MCF 10A (cell line): ENCODE measurements at regions of chr11 and their contacts with region 1.

Region 1: GRCh38 chr11:6481012-6481923 is at the starts of genes ARFIP2 and TIMM10B:
- DNase-seq: peak; percentile 96
- H3K4me3 Mint-ChIP-seq: peak within 1 kb of the TSS; percentile 93
- H3K27ac Mint-ChIP-seq: peak within 1 kb of the TSS; percentile 99
- H3K4me1 Mint-ChIP-seq: peaks cover 17% of the 10 kb centered on the region
- H3K27me3 Mint-ChIP-seq: no peaks in the 10 kb centered on the region
- CTCF ChIP-seq: no peak
- total RNA-seq, gene ARFIP2: 76.3 and 96.0 TPM in 2 replicates
- total RNA-seq, gene TIMM10B: 36.2 and 42.1 TPM in 2 replicates

Region 2: GRCh38 chr11:6419009-6419631 is 62.1 kb before region 1 on chr11 and contains the start of gene APBB1:
- CTCF ChIA-PET with region 1: no interaction called
- POLR2A ChIA-PET with region 1: interaction called, 10 read pairs
- intact Hi-C with region 1: no loop called
- DNase-seq: no peak
- H3K4me3 Mint-ChIP-seq: peak within 1 kb of the TSS; percentile 45
- H3K27ac Mint-ChIP-seq: no peak within 1 kb of the TSS
- H3K4me1 Mint-ChIP-seq: no peaks in the 10 kb centered on the region
- H3K27me3 Mint-ChIP-seq: peaks cover 37% of the 10 kb centered on the region
- CTCF ChIP-seq: no peak
- total RNA-seq, gene APBB1: 0.89 and 1.3 TPM in 2 replicates

Region 3: GRCh38 chr11:6505577-6506240 is 24.4 kb after region 1 on chr11:
- CTCF ChIA-PET with region 1: interaction called, 65 read pairs
- POLR2A ChIA-PET with region 1: interaction called, 9 read pairs
- intact Hi-C with region 1: no loop called
- DNase-seq: peak; percentile 64
- H3K4me3 Mint-ChIP-seq: no peak overlapping the region
- H3K27ac Mint-ChIP-seq: no peak overlapping the region
- H3K4me1 Mint-ChIP-seq: no peaks in the 10 kb centered on the region
- H3K27me3 Mint-ChIP-seq: no peaks in the 10 kb centered on the region
- CTCF ChIP-seq: peak; percentile 52

Region 4: DNA sequence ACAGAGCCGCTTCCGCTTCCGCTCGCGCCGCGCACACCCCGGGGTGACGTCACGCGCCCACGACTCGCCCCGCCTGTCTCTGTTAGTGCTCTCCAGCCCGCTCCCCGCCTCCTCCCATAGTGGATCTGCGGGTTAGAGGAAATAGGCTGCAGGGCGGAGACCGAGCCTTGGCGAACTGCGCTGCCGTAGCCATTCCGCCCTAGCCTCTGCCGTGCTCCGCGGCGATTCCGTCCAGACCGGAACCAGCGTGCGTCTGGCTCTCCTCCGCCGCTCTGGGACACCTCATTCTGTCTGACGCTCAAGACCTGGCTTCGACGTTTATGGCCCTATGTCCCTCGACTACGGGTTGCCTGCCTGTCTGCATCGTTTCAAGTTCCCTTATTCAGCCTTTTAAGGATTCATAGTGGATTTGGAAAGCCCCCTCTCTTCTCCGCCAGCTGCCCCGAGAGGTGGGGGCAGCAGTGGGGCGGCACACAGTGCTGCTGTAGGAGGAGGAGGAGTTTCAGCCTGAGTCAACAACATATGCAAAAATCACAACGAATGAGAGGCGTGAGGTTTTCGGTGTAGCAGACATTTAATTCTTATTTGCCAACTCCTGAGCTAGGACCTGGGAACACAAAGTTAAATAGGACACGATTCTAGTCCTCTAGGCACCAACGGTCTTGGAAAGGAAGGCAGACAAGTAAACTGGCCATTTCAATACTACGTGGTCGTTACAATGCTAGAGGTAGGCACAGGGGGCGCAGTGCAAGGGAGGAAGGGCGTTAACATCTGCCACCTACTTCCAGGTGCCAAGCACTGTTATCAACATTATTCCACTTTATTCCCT is 131.2 kb after region 1 on chr11 and contains the start of gene TAF10:
- CTCF ChIA-PET with region 1: interaction called, 3 read pairs
- POLR2A ChIA-PET with region 1: interaction called, 26 read pairs
- intact Hi-C with region 1: loop called (anchors 10 kb)
- DNase-seq: peak; percentile 96
- H3K4me3 Mint-ChIP-seq: no peak within 1 kb of the TSS
- H3K27ac Mint-ChIP-seq: no peak within 1 kb of the TSS
- H3K4me1 Mint-ChIP-seq: peaks cover 9% of the 10 kb centered on the region
- H3K27me3 Mint-ChIP-seq: no peaks in the 10 kb centered on the region
- CTCF ChIP-seq: peak; percentile 18
- total RNA-seq, gene TAF10: 157 and 167 TPM in 2 replicates

Region 5: GRCh38 chr11:6682936-6683861 is 201.9 kb after region 1 on chr11 and contains the start of gene MRPL17:
- CTCF ChIA-PET with region 1: interaction called, 3 read pairs
- POLR2A ChIA-PET with region 1: interaction called, 11 read pairs
- intact Hi-C with region 1: no loop called
- DNase-seq: peak; percentile 99
- H3K4me3 Mint-ChIP-seq: peak within 1 kb of the TSS; percentile 100
- H3K27ac Mint-ChIP-seq: peak within 1 kb of the TSS; percentile 95
- H3K4me1 Mint-ChIP-seq: peaks cover 12% of the 10 kb centered on the region
- H3K27me3 Mint-ChIP-seq: no peaks in the 10 kb centered on the region
- CTCF ChIP-seq: peak; percentile 75
- total RNA-seq, gene MRPL17: 78.0 and 88.4 TPM in 2 replicates